WTC11 (cell line): ENCODE measurements at regions of chr18 and their contacts with region 1.

Region 1: GRCh38 chr18:50203801-50204604 is 9.1 kb upstream of the MYO5B start:
- DNase-seq: peak; percentile 74
- ATAC-seq: peak; percentile 90
- H3K4me3 Mint-ChIP-seq: peak overlapping the region; percentile 62
- H3K27ac Mint-ChIP-seq: no peak overlapping the region
- H3K4me1 Mint-ChIP-seq: peaks cover 5% of the 10 kb centered on the region
- H3K27me3 Mint-ChIP-seq: peaks cover 17% of the 10 kb centered on the region
- CTCF ChIP-seq: peak; percentile 20; the same call in 1 of the 2 replicates

Region 2: DNA sequence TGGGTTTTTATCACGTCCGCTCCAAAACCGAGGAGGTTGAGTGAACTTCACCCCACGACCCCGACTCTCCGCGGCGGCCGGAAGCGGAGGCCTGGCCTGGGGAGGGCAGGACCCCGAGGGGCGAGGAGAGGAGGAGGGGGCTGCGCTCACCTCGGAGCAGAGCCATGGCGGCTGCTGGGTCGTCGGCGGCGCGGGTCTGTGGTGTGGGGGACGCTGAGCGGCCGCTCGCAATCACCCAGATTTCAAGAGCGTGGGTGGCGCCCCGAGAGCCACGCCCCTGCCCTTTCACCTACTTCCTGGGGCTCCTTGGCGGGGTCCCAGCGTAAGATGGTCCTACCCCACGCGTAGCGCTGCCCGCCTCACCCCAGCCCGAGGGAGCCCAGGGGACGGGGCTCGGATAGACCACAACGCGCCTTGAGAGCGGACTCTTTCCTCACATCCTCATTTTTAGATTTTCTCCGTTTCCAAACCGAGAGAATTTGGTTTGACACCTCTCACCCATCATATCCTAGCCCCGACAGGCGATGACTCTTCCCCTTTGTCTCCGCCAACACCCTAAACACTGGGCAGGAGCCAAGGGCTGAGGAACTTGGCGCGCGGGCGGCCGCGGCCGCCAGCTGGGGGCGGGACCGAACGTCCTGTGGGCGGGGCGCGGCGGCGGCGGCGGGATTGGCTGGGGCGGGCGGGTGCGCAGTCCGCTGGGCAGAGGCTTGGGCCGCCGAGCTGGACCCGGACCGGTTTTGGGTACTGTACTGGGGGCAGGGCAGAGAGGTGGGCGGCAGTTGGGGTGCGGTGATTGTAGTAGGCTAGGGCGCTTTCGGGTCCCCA is 390.5 kb before region 1 on chr18 and contains the start of gene ACAA2:
- CTCF ChIA-PET with region 1: no interaction called
- POLR2A ChIA-PET with region 1: interaction called, 12 read pairs
- DNase-seq: peak; percentile 80
- ATAC-seq: peak; percentile 90
- H3K4me3 Mint-ChIP-seq: peak within 1 kb of the TSS; percentile 90
- H3K27ac Mint-ChIP-seq: peak within 1 kb of the TSS; percentile 100
- H3K4me1 Mint-ChIP-seq: peaks cover 23% of the 10 kb centered on the region
- H3K27me3 Mint-ChIP-seq: no peaks in the 10 kb centered on the region
- CTCF ChIP-seq: no peak
- total RNA-seq, gene ACAA2: 135 to 136 TPM (median 136 TPM) in 3 replicates

Region 3: GRCh38 chr18:49944663-49945062 is 259.3 kb before region 1 on chr18:
- CTCF ChIA-PET with region 1: interaction called, 13 read pairs
- POLR2A ChIA-PET with region 1: no interaction called
- DNase-seq: peak; percentile 35
- ATAC-seq: peak; percentile 76
- H3K4me3 Mint-ChIP-seq: no peak overlapping the region
- H3K27ac Mint-ChIP-seq: no peak overlapping the region; the same call in 1 of the 2 replicates
- H3K4me1 Mint-ChIP-seq: no peaks in the 10 kb centered on the region
- H3K27me3 Mint-ChIP-seq: no peaks in the 10 kb centered on the region; the same call in 1 of the 2 replicates
- CTCF ChIP-seq: no peak

Region 4: GRCh38 chr18:50051288-50051687 is 152.7 kb before region 1 on chr18:
- CTCF ChIA-PET with region 1: interaction called, 24 read pairs
- POLR2A ChIA-PET with region 1: no interaction called
- DNase-seq: peak; percentile 22
- ATAC-seq: peak; percentile 86
- H3K4me3 Mint-ChIP-seq: no peak overlapping the region
- H3K27ac Mint-ChIP-seq: no peak overlapping the region
- H3K4me1 Mint-ChIP-seq: no peaks in the 10 kb centered on the region
- H3K27me3 Mint-ChIP-seq: no peaks in the 10 kb centered on the region; the same call in 1 of the 2 replicates
- CTCF ChIP-seq: no peak

Region 5: DNA sequence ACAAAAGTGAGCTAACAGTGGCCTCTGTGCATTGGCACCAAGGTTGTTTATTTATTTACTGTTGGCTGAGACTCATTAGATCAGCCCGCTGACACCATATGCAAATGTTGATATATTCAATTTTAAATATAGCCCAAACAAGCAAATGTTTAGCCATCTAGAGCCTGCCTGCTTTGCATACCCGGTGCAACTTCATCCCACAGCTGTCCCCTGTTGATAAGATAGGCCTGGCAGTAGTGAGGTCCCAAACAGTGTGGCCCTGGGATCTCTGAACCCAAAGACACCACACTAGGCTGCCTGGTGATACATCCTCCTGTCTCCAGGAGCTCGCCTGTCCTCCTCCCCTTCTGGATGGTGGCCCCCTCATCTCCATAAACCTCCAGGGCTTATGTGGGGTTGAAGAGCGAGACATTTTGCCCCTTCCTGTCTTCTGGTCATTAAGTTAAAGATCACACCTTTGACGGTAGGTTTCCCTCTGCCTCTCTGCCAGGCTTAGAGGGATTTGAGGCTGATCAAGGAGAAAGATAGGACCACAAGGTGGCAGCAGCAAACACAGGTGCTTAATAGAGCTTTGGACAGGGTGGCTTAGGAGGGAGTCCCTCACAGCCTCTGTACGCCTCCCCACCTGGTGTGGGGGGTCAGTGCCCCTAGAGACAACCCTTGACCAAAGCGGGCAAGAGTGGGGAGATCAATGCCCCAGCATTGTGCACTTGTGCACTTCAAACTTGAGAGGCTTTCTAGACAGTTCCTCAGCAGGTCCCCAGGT is 14.6 kb after region 1 on chr18:
- CTCF ChIA-PET with region 1: interaction called, 23 read pairs
- POLR2A ChIA-PET with region 1: no interaction called
- DNase-seq: peak; percentile 32
- ATAC-seq: peak; percentile 85
- H3K4me3 Mint-ChIP-seq: no peak overlapping the region
- H3K27ac Mint-ChIP-seq: no peak overlapping the region
- H3K4me1 Mint-ChIP-seq: peaks cover 3% of the 10 kb centered on the region; the same call in 1 of the 2 replicates
- H3K27me3 Mint-ChIP-seq: peaks cover 8% of the 10 kb centered on the region
- CTCF ChIP-seq: peak; percentile 11; the same call in 1 of the 2 replicates

Region 6: DNA sequence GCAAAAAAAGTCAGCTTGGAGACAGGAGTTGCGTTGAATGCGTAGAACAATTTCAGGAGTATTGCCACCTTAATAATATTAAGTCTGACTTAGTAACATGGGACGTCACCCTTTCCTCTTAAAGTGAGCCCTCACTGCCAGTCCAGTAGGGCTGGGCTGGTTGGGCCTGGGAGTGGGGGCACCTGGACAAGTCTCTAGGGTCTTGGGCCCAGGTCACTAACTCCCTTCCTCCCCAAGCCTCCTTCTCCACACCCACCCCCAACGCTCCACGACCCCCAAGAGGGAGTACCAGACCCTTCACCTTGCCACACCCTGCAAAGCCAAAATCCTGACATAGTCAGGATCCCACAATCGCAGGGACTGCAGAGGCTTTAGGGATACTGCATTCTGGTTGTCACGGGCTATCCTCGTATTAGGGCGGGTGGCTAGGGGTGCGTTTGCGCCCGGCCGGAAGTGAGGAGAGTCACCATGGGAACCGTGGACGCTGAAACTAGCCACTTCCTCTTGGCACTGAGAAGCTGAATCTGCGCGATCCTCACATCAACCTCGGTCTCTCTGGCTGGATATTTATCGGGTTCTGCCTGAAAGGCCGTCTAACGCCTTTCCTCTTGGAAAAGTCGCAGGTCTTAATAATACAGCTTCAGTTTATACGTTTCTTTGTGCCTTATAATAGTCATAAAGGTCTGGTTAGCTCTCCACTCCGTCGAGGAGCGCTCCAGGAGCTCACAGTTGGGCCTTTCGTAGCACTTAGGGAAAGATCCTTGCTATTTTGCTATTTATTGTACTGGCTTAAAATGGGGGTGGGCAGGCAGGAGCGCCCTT is 93.8 kb after region 1 on chr18:
- CTCF ChIA-PET with region 1: no interaction called
- POLR2A ChIA-PET with region 1: no interaction called
- DNase-seq: peak; percentile 80
- ATAC-seq: peak; percentile 98
- H3K4me3 Mint-ChIP-seq: peak overlapping the region; percentile 81
- H3K27ac Mint-ChIP-seq: no peak overlapping the region
- H3K4me1 Mint-ChIP-seq: 0 out of 2 replicates have a peak, but pooled peaks cover 6% of the 10 kb centered on the region
- H3K27me3 Mint-ChIP-seq: peaks cover 72% of the 10 kb centered on the region
- CTCF ChIP-seq: no peak

Region 7: DNA sequence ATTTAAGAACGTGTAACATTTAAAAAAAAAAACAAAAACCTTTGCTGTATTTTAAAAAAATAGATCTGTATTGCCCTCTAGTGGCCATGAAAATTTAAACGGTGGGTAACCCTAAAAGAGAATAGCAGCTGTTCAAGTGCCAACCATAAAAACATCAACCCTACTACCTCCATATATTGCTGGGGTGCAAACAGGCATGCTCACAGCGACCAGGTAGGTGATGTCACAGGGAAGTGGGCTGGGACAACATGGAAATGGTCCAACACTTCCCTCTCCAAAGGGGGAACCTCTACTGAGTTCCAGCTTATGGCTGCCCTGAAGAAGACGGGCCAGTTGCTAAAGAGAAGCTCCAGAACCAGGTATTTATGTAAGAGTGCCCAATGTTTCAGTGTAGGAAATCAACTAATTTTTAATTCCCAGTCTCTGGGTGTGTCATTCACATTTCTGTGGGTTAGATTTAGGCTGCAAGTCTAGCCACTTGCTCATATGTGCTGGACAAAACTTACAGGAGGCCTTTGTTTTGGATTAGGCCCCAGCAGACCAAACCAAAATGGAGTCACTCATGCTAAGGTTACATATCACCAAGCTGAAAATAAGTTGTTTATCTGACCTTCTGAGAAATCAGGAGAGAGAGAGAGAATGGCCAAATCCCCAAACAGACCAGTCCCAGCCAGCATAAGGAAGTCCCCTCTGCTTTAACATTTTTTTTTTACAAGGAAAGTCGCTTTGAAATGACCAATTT is 225.4 kb after region 1 on chr18:
- CTCF ChIA-PET with region 1: interaction called, 13 read pairs
- POLR2A ChIA-PET with region 1: no interaction called
- DNase-seq: no peak
- ATAC-seq: 0 out of 2 replicates have a peak, but pooled peaks have one; percentile 28
- H3K4me3 Mint-ChIP-seq: no peak overlapping the region
- H3K27ac Mint-ChIP-seq: no peak overlapping the region
- H3K4me1 Mint-ChIP-seq: no peaks in the 10 kb centered on the region
- H3K27me3 Mint-ChIP-seq: peaks cover 5% of the 10 kb centered on the region; the same call in 1 of the 2 replicates
- CTCF ChIP-seq: peak; percentile 18; the same call in 1 of the 2 replicates